ENCODE measurements at regions of chr5 and their contacts with region 1.

Region 1: GRCh38 chr5:110441035-110441434 is 285.4 kb downstream of the TMEM232 start:
- DNase-seq: peak; percentile 49
- H3K4me3 Mint-ChIP-seq: no peak overlapping the region
- H3K27ac Mint-ChIP-seq: no peak overlapping the region
- H3K4me1 Mint-ChIP-seq: no peaks in the 10 kb centered on the region
- H3K27me3 Mint-ChIP-seq: peaks cover 14% of the 10 kb centered on the region
- CTCF ChIP-seq: peak; percentile 44

Region 2: GRCh38 chr5:110169461-110169860 is 271.6 kb before region 1 on chr5:
- CTCF ChIA-PET with region 1: no interaction called
- POLR2A ChIA-PET with region 1: no interaction called
- intact Hi-C with region 1: no loop called
- DNase-seq: no peak
- H3K4me3 Mint-ChIP-seq: no peak overlapping the region
- H3K27ac Mint-ChIP-seq: no peak overlapping the region
- H3K4me1 Mint-ChIP-seq: no peaks in the 10 kb centered on the region
- H3K27me3 Mint-ChIP-seq: no peaks in the 10 kb centered on the region
- CTCF ChIP-seq: no peak

Region 3: DNA sequence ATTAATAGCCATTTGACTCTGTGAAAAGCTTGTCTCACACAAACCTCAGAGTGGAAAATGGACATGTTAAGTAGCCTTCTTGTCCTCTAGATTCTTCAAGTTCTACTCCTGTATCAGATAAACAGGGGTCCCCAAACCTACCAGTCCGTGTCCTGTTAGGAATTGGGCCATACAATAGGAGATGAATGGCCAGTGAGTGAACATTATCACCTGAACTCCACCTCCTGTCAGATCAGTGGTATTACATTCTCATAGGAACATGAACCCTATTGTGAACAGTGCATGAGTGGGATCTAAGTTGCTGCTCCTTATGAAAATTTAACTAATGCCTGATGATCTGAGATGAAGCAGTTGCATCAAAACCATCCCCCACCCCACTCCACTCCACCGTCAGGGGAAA is 149.2 kb after region 1 on chr5:
- CTCF ChIA-PET with region 1: interaction called, 4 read pairs
- POLR2A ChIA-PET with region 1: no interaction called
- intact Hi-C with region 1: loop called (anchors 1 kb)
- DNase-seq: peak; percentile 45
- H3K4me3 Mint-ChIP-seq: no peak overlapping the region
- H3K27ac Mint-ChIP-seq: no peak overlapping the region
- H3K4me1 Mint-ChIP-seq: no peaks in the 10 kb centered on the region
- H3K27me3 Mint-ChIP-seq: peaks cover 35% of the 10 kb centered on the region
- CTCF ChIP-seq: peak; percentile 56

Region 4: GRCh38 chr5:110625376-110625999 is 184.5 kb after region 1 on chr5:
- CTCF ChIA-PET with region 1: interaction called, 16 read pairs
- POLR2A ChIA-PET with region 1: interaction called, 3 read pairs
- intact Hi-C with region 1: loop called (anchors 1 kb)
- DNase-seq: peak; percentile 36
- H3K4me3 Mint-ChIP-seq: no peak overlapping the region
- H3K27ac Mint-ChIP-seq: no peak overlapping the region
- H3K4me1 Mint-ChIP-seq: no peaks in the 10 kb centered on the region
- H3K27me3 Mint-ChIP-seq: peaks cover 24% of the 10 kb centered on the region
- CTCF ChIP-seq: no peak

Region 5: DNA sequence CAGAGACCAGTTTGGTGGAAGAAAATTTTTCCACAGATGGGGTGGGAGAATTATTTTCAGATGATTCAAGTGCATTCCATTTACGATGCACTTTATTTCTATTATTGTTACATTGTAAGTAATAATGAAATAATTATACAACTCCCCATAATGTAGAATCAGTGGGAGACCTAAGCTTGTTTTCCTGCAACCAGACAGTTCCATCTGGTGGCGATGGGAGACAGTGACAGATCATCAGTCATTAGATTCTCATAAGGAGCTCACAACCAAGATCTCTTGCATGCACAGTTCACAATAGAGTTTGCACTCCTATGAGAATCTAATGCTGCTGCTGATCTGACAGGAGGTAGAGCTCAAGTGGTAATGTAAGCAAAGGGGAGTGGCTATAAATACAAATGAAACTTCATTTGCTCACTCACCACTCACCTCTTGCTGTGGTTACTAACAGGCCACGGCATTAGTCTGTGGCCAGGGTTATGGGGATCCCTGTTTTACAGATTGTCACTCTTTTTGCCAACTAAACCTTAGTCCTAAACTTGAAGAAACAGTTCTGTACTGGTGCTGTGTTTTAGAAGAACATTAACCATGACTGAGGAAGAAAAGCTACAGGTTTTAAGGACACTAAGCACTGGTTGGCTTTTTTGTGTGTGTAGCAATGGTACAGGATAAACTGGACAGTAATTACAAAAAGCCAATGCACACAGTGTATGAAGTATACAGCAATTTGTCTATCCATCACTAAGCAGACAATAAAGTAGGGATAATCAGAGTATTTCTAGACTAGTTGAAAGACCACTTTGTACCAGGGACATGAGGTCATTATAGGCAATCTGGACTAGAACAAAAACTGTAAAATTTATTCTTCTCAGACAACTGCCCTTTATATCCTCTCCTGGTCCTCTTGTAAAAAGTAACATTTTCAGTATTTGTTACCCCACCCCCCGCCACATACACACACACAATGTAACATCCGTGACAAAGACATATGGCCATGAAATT is 275.5 kb after region 1 on chr5:
- CTCF ChIA-PET with region 1: no interaction called
- POLR2A ChIA-PET with region 1: no interaction called
- intact Hi-C with region 1: loop called (anchors 10 kb)
- DNase-seq: no peak
- H3K4me3 Mint-ChIP-seq: no peak overlapping the region
- H3K27ac Mint-ChIP-seq: no peak overlapping the region
- H3K4me1 Mint-ChIP-seq: peaks cover 5% of the 10 kb centered on the region
- H3K27me3 Mint-ChIP-seq: no peaks in the 10 kb centered on the region
- CTCF ChIP-seq: no peak

Region 6: GRCh38 chr5:110768138-110768860 is 327.3 kb after region 1 on chr5:
- CTCF ChIA-PET with region 1: no interaction called
- POLR2A ChIA-PET with region 1: no interaction called
- intact Hi-C with region 1: no loop called
- DNase-seq: no peak
- H3K4me3 Mint-ChIP-seq: no peak overlapping the region
- H3K27ac Mint-ChIP-seq: no peak overlapping the region
- H3K4me1 Mint-ChIP-seq: peaks cover 19% of the 10 kb centered on the region
- H3K27me3 Mint-ChIP-seq: no peaks in the 10 kb centered on the region
- CTCF ChIP-seq: no peak

Measured in MCF 10A (cell line).